Calu3 (cell line): ENCODE measurements at regions of chr7 and their contacts with region 1.

Region 1: DNA sequence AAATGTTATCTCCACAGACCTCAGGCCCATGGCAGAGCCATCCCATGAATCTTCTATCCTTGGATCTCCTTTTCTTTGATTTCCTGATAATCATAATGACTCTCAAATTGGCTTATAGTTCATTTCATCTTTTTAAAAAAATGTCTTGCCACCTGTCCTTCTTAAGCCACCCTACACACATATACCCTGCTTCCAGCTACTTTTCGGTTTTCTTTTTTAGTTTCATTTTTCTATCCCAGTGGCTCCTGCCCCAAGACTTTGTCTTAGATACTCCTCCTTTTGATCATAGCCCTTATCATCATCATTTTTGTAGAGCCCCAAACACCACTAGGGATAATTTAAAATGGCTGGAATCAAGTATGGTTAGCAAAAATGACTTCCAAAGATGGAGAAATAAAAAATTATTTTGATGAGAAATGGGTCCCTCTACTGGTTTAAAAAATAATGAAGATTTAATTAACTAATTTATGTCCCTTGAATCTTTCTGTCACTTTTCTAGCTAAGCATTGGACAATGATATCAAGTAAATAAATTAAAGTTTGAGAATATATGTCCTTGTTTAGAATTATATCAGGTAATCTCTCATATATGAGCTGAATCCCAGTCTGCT is 277.3 kb upstream of the SEMA3D start:
- DNase-seq: no peak
- H3K4me3 Mint-ChIP-seq: no peak overlapping the region
- H3K27ac Mint-ChIP-seq: no peak overlapping the region
- H3K4me1 Mint-ChIP-seq: peaks cover 14% of the 10 kb centered on the region
- H3K27me3 Mint-ChIP-seq: no peaks in the 10 kb centered on the region
- CTCF ChIP-seq: no peak

Region 2: DNA sequence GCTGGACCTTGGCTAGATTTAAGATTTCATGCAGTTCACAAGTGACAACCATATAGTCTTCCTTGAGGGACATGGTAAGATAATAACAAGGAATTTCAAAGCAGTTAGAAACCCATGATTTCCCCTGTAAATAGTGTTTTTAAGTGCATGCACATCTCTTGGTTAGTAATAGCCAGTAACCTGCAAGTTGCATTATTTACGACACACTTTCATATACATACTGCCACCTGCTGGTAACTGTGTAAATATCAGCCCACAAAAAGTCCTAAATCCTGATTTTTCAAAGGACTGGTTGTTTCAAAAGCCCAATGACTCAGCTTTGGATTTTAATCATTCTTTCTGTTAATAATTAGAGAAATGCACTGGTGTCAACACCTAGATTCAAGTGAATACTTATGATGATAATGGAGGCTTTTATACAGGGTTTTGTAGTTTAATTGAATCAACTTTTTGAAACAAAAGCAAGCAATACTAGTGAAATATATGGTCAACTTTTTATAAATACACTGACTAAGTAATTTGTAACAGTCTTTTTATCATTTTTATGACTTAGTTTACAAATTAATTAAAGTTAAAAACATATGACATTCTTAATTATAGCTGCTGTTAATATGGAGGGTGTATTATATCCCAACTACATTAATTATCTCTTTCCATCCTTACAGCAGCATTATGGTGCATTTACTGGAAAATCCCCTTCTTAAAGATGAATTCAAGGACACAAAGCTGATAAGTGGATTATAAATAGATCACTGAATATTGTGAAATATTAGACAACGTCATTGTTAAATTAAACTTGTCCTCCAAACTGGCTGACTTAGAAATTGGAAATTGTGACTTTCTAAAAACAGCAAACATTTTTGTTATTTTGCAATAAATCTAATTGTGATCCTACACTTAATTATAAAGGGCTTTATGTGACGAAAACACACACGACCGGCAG is 90.4 kb after region 1 on chr7:
- CTCF ChIA-PET with region 1: interaction called, 6 read pairs
- intact Hi-C with region 1: loop called (anchors 10 kb)
- DNase-seq: peak; percentile 34
- H3K4me3 Mint-ChIP-seq: no peak overlapping the region
- H3K27ac Mint-ChIP-seq: peak overlapping the region; percentile 36
- H3K4me1 Mint-ChIP-seq: peaks cover 23% of the 10 kb centered on the region
- H3K27me3 Mint-ChIP-seq: no peaks in the 10 kb centered on the region
- CTCF ChIP-seq: no peak

Region 3: DNA sequence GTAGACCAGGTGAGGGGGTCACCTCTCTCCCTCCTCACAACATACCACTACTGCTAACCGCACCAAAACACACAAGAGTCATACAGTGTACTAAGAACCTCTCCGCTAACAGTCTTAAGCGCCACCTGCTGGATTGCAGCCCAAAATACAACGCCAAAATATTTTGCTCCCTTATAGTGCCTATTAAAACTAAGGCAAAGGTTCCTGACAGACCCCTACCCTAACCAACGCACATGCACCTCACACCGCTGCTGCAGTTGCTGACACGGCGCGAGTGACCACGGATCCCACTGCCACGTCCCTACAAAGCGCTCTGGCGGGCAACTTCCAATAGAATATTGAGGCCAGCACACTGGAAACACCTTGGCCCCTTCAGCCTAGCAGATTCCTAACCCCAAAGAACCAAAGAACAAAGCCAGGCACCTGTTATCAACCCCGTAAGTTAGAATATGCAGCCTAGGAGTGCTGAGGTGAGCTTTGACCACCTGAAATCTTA is 286.4 kb after region 1 on chr7:
- CTCF ChIA-PET with region 1: no interaction called
- intact Hi-C with region 1: loop called (anchors 10 kb)
- DNase-seq: peak; percentile 34
- H3K4me3 Mint-ChIP-seq: no peak overlapping the region
- H3K27ac Mint-ChIP-seq: no peak overlapping the region
- H3K4me1 Mint-ChIP-seq: peaks cover 10% of the 10 kb centered on the region
- H3K27me3 Mint-ChIP-seq: no peaks in the 10 kb centered on the region
- CTCF ChIP-seq: peak; percentile 56